Natural killer cell (primary cell): ENCODE measurements at regions of chr10 and their contacts with region 1.

Region 1: DNA sequence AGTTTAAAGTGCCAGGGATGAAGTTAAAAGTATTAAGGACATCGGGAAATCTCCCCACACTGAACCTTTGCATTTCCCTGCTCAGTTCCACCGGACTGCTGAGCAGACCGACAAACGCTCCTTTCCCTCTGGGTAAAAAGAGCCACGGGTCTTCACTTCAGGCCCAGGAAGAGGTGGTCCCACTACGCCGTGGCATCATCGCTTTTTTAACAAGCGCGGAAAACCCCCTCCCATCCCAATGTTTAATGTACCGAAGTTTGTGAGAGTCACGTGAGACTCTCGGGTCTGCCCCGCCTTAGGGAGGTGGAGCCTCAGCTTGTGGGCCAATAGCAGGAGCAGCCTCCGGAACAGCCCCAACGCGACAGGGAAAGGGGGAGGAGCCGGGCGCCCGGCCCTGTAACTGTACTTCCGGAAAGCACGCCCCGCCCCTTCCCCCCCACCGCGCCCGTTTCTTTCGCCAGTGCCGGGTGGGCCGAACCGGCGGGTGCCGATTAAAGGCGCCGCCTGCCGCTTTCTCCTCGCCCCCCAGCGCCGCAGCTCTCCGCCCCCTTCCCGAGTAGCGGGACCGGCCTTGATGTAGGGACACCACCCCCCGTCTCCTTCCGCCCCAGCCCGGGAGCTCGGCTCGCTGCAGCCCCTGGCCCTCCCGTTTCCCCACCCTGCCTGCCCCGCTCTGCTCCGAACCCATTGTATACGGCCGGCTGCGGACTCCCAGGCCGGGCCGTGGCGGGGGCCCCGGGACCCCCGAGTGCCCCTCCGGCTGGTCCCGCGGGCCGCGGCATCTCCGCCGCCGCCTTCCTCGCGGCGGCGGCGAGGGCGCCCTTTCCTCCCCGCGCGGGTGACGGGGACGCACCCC is 2.2 kb upstream of the TRIM8 start:
- DNase-seq: peak; percentile 95 to 98
- ATAC-seq: peak; percentile 69 to 91 (median 81)
- H3K4me3 ChIP-seq: peak overlapping the region; percentile 80
- H3K4me3 Mint-ChIP-seq: peak overlapping the region; percentile 96
- H3K27ac ChIP-seq: peak overlapping the region; percentile 95
- H3K27ac Mint-ChIP-seq: peak overlapping the region; percentile 92 to 97
- H3K4me1 ChIP-seq: peaks cover 26% of the 10 kb centered on the region
- H3K4me1 Mint-ChIP-seq: peaks cover 27 to 31% of the 10 kb centered on the region in 2 donors
- H3K27me3 ChIP-seq: no peaks in the 10 kb centered on the region
- H3K27me3 Mint-ChIP-seq: no peaks in the 10 kb centered on the region
- CTCF ChIP-seq: no peak

Region 2: DNA sequence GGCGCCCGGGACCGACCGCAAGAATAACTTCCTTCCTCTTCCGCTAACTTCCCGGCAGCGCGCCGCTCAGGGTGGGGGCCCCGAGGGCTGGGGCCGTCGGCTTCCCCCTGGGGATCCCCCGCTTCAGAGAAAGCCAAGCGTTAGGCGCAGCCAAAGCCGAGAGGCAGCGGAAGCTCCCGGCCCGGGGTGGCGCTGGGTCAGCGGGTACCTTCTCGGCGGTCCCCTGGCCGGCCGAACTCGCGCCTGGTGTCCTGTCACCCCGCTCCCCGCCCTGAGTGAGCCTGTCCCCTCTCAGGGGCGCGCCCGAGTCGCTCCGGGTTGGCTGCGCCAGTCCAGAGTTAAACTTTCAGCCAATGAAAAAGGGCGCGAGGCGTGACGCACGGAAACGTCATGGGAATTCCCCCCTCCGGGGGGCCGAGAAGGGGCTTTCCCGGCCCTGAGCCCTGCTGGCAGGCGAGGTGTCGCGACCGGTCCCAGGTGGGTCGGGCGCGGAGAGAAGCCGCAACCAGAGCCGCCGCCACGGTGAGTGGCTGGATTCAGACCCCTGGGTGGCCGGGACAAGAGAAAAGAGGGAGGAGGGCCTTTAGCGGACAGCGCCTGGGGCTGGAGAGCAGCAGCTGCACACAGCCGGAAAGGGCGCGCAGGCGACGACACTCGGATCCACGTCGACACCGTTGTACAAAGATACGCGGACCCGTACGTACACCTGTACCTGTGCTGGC is 247.9 kb before region 1 on chr10:
- intact Hi-C with region 1: loop called (anchors 10 kb)
- DNase-seq: peak; percentile 99 to 100
- ATAC-seq: peak; percentile 74 to 91 (median 80)
- H3K4me3 ChIP-seq: peak overlapping the region; percentile 69
- H3K4me3 Mint-ChIP-seq: peak overlapping the region; percentile 98
- H3K27ac ChIP-seq: peak overlapping the region; percentile 91
- H3K27ac Mint-ChIP-seq: peak overlapping the region; percentile 99
- H3K4me1 ChIP-seq: peaks cover 40% of the 10 kb centered on the region
- H3K4me1 Mint-ChIP-seq: peaks cover 34 to 43% of the 10 kb centered on the region in 2 donors
- H3K27me3 ChIP-seq: no peaks in the 10 kb centered on the region
- H3K27me3 Mint-ChIP-seq: peaks cover 0 to 4% of the 10 kb centered on the region in 2 donors
- CTCF ChIP-seq: peak; percentile 31

Region 3: GRCh38 chr10:102673819-102674511 is 31.9 kb after region 1 on chr10:
- intact Hi-C with region 1: loop called (anchors 2 kb)
- DNase-seq: peak; percentile 41 to 91
- ATAC-seq: peak; percentile 77 to 86 (median 85)
- H3K4me3 ChIP-seq: peak overlapping the region; percentile 25
- H3K4me3 Mint-ChIP-seq: peak overlapping the region; percentile 91
- H3K27ac ChIP-seq: peak overlapping the region; percentile 77
- H3K27ac Mint-ChIP-seq: peak overlapping the region; percentile 85
- H3K4me1 ChIP-seq: peaks cover 52% of the 10 kb centered on the region
- H3K4me1 Mint-ChIP-seq: peaks cover 33 to 43% of the 10 kb centered on the region in 2 donors
- H3K27me3 ChIP-seq: no peaks in the 10 kb centered on the region
- H3K27me3 Mint-ChIP-seq: no peaks in the 10 kb centered on the region
- CTCF ChIP-seq: no peak

Region 4: GRCh38 chr10:102743588-102744373 is 101.7 kb after region 1 on chr10 and contains the start of gene WBP1L:
- intact Hi-C with region 1: loop called (anchors 1 kb)
- DNase-seq: peak; percentile 92 to 99
- ATAC-seq: peak; percentile 96 to 99 (median 97)
- H3K4me3 ChIP-seq: peak within 1 kb of the TSS; percentile 85
- H3K4me3 Mint-ChIP-seq: peak within 1 kb of the TSS; percentile 93
- H3K27ac ChIP-seq: peak within 1 kb of the TSS; percentile 71
- H3K27ac Mint-ChIP-seq: peak within 1 kb of the TSS; percentile 78 to 86
- H3K4me1 ChIP-seq: peaks cover 16% of the 10 kb centered on the region
- H3K4me1 Mint-ChIP-seq: peaks cover 50 to 53% of the 10 kb centered on the region in 2 donors
- H3K27me3 ChIP-seq: no peaks in the 10 kb centered on the region
- H3K27me3 Mint-ChIP-seq: no peaks in the 10 kb centered on the region
- CTCF ChIP-seq: no peak
- total RNA-seq, gene WBP1L: 34.6 to 48.4 (median 47.9) TPM

Region 5: GRCh38 chr10:103367782-103368518 is 725.8 kb after region 1 on chr10 and contains the start of gene TAF5:
- intact Hi-C with region 1: loop called (anchors 10 kb)
- DNase-seq: peak; percentile 83 to 96
- ATAC-seq: peak; percentile 76 to 91 (median 77)
- H3K4me3 ChIP-seq: peak within 1 kb of the TSS; percentile 67
- H3K4me3 Mint-ChIP-seq: peak within 1 kb of the TSS; percentile 97
- H3K27ac ChIP-seq: peak within 1 kb of the TSS; percentile 69
- H3K27ac Mint-ChIP-seq: peak within 1 kb of the TSS; percentile 89 to 95
- H3K4me1 ChIP-seq: peaks cover 18% of the 10 kb centered on the region
- H3K4me1 Mint-ChIP-seq: peaks cover 19 to 22% of the 10 kb centered on the region in 2 donors
- H3K27me3 ChIP-seq: no peaks in the 10 kb centered on the region
- H3K27me3 Mint-ChIP-seq: no peaks in the 10 kb centered on the region
- CTCF ChIP-seq: no peak
- total RNA-seq, gene TAF5: 3.6 to 8.8 (median 6.3) TPM